Endothelial cell of umbilical vein (primary cell): ENCODE measurements at regions of chr4 and their contacts with region 1.

Region 1: GRCh38 chr4:185096032-185096653 is 46.9 kb upstream of the SLC25A4 start:
- DNase-seq: peak; percentile 49
- H3K4me3 ChIP-seq: no peak overlapping the region
- H3K27ac ChIP-seq: no peak overlapping the region
- H3K4me1 ChIP-seq: no peaks in the 10 kb centered on the region
- H3K27me3 ChIP-seq: peaks cover 2 to 11% of the 10 kb centered on the region in 2 experiments
- CTCF ChIP-seq: peak; percentile 31 to 39
- POLR2A ChIP-seq: no peak

Region 2: GRCh38 chr4:185005216-185005819 is 90.8 kb before region 1 on chr4:
- CTCF ChIA-PET with region 1: interaction called, 43 read pairs
- POLR2A ChIA-PET with region 1: no interaction called
- dilution Hi-C with region 1: no loop called
- intact Hi-C with region 1: loop called (anchors 1 kb)
- DNase-seq: peak; percentile 68
- H3K4me3 ChIP-seq: no peak overlapping the region
- H3K27ac ChIP-seq: no peak overlapping the region
- H3K4me1 ChIP-seq: no peaks in the 10 kb centered on the region
- H3K27me3 ChIP-seq: peaks cover 0 to 8% of the 10 kb centered on the region in 2 experiments
- CTCF ChIP-seq: peak; percentile 94 to 96
- POLR2A ChIP-seq: no peak

Region 3: DNA sequence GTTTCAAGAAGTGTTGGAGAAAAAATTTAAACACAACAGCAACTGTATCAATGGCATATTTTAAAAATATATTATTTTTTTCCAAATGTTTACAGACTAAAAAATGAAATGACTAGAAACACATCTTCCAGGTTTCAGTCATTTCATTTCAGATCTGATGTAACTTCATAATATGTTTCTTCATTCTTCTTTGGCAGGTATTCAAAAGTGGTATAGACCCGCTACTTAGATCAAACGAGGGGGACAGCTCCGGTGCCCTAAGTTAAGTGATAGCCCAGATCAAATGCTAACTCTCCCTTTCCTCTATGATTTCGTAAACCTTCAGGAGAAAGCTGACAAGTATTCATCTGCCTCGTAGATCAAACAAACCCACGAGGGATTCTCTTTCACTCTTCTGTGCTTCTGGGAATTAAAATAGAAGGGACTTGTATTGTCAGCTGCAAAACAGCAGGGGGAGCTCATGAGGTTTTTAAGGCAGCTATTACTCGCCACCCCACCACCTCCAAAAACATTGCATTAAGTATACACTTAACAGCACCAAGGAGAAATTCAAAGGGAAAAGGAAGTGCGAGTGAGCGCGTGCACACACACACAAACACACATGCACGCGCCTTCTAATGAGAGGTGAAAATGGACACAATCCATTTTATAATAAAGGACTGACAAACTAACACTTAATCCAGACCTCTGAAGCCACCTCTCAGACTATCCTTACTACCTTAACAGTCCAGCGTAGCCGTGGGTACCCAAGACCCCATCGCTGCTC is 56.5 kb before region 1 on chr4:
- CTCF ChIA-PET with region 1: interaction called, 168 read pairs
- POLR2A ChIA-PET with region 1: no interaction called
- dilution Hi-C with region 1: no loop called
- intact Hi-C with region 1: loop called (anchors 1 kb)
- DNase-seq: peak; percentile 68
- H3K4me3 ChIP-seq: no peak overlapping the region
- H3K27ac ChIP-seq: no peak overlapping the region
- H3K4me1 ChIP-seq: no peaks in the 10 kb centered on the region
- H3K27me3 ChIP-seq: peaks cover 0 to 3% of the 10 kb centered on the region in 2 experiments
- CTCF ChIP-seq: peak; percentile 73 to 76
- POLR2A ChIP-seq: no peak

Region 4: DNA sequence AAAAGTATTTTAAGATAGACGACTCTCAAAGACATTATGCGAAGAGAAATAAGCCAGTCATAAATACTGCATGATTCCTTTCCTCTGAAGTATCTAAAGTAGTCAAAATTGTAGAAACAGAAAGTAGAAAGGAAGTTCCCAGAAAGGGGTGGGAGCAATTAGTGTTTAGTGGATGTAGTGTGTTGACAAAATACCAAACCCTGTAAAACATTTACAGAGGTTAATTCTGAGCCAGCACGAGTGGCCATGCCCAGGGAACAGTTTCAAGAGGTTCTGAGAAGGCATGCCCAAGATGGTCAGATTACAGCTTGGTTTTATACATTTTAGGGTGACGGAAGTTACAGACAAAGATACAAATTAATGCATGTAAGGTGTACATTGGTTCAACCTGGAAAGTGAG is 12.5 kb after region 1 on chr4:
- CTCF ChIA-PET with region 1: interaction called, 26 read pairs
- POLR2A ChIA-PET with region 1: no interaction called
- dilution Hi-C with region 1: no loop called
- intact Hi-C with region 1: no loop called
- DNase-seq: no peak
- H3K4me3 ChIP-seq: no peak overlapping the region
- H3K27ac ChIP-seq: no peak overlapping the region
- H3K4me1 ChIP-seq: peaks cover 9% of the 10 kb centered on the region
- H3K27me3 ChIP-seq: peaks cover 0 to 2% of the 10 kb centered on the region in 2 experiments
- CTCF ChIP-seq: no peak
- POLR2A ChIP-seq: no peak

Region 5: GRCh38 chr4:185134307-185134869 is 38.2 kb after region 1 on chr4:
- CTCF ChIA-PET with region 1: interaction called, 29 read pairs
- POLR2A ChIA-PET with region 1: no interaction called
- dilution Hi-C with region 1: no loop called
- intact Hi-C with region 1: loop called (anchors 2 kb)
- DNase-seq: peak; percentile 56
- H3K4me3 ChIP-seq: no peak overlapping the region
- H3K27ac ChIP-seq: no peak overlapping the region
- H3K4me1 ChIP-seq: peaks cover 4% of the 10 kb centered on the region
- H3K27me3 ChIP-seq: no peaks in the 10 kb centered on the region
- CTCF ChIP-seq: peak; percentile 32 to 53
- POLR2A ChIP-seq: no peak